Activated T-helper 2 cell treated with anti-CD3 and anti-CD28 coated beads, Interferon-gamma antibody, Interleukin-2, Interleukin-4, amounts not matched to agents 10 μg/mL and 5 μg/mL and 100 μg/mL, durations not matched to agents 14 hours and 24 hours and 36 hours (primary cell): ENCODE measurements at regions of chr19 and their contacts with region 1.

Region 1: DNA sequence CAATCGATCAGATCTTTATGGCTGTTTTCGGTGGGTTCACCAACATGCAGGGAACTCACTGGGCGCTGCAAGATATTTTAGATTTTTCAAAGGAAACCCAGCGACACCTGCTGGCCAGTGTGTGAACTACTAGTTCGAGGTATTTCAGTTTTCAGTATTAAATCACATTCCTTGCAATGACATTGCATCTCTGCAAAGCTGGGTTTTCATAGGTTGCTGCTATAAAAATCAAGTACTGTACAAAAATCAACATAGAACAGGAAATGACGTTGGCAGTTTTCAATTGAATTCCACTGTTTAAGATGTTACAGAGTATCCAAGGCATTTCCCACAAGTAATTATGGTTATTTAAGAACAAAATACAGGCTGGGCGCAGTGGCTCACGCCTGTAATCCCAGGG is 17.6 kb downstream of the LIG1 start:
- DNase-seq: peak; percentile 40
- H3K4me3 Mint-ChIP-seq: no peak overlapping the region
- H3K27ac Mint-ChIP-seq: no peak overlapping the region
- H3K4me1 Mint-ChIP-seq: peaks cover 5% of the 10 kb centered on the region
- H3K27me3 Mint-ChIP-seq: no peaks in the 10 kb centered on the region

Region 2: GRCh38 chr19:48110350-48110966 is 42.1 kb before region 1 on chr19 and contains the start of gene PLA2G4C:
- intact Hi-C with region 1: loop called (anchors 1 kb)
- DNase-seq: peak; percentile 75
- H3K4me3 Mint-ChIP-seq: peak within 1 kb of the TSS; percentile 83
- H3K27ac Mint-ChIP-seq: peak within 1 kb of the TSS; percentile 88
- H3K4me1 Mint-ChIP-seq: peaks cover 10% of the 10 kb centered on the region
- H3K27me3 Mint-ChIP-seq: no peaks in the 10 kb centered on the region
- total RNA-seq, gene PLA2G4C: 11.3 and 11.4 TPM in 2 replicates

Region 3: GRCh38 chr19:48190288-48190884 is 37.8 kb after region 1 on chr19:
- intact Hi-C with region 1: no loop called
- DNase-seq: no peak
- H3K4me3 Mint-ChIP-seq: no peak overlapping the region
- H3K27ac Mint-ChIP-seq: no peak overlapping the region
- H3K4me1 Mint-ChIP-seq: no peaks in the 10 kb centered on the region
- H3K27me3 Mint-ChIP-seq: no peaks in the 10 kb centered on the region

Region 4: DNA sequence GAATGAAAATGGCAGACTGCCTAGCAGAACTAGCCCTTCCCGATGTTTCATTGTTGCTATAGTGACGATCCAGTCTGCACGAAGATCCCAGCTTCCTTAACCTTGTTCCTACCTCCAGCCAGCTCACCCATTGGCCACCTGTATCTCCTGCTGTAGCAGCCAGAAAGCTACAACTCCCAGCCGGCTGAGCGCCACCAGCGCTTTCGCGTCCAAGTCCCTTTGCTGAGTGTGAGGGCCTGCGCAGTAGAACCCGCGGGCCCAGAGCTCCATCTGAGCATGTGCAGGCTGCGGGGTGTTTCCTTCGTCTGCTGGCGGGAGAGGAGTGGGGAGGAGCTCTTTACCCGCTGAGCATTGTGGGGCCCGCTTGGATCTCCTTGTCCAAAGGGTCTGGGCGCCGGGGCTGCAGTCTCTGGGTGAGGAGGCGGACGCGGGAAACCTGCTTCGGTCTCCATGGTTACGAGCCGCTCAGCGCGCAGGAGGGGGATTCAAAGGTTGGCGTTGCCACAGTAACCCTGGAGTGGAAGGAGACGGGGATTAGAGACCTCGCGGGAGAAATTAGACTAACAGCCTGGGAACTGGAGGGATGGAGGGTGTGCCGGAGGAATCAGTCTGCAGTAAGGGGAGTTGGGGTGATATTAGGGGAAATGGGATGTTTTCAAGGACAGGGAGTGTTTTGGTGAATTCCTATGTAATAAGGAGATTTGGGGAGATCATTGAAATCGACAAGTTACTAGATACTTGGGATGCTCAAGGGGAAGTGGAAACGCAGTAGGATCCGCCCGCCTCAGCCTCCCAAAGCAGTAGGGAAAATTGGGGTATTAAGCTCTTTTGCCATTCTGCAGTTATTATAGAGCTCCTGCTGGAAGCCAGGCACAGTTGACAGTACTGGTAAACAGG is 51.4 kb after region 1 on chr19:
- intact Hi-C with region 1: no loop called
- DNase-seq: peak; percentile 92
- H3K4me3 Mint-ChIP-seq: no peak overlapping the region
- H3K27ac Mint-ChIP-seq: no peak overlapping the region
- H3K4me1 Mint-ChIP-seq: peaks cover 7% of the 10 kb centered on the region
- H3K27me3 Mint-ChIP-seq: no peaks in the 10 kb centered on the region